PC-3 (cell line): ENCODE measurements at regions of chr7 and their contacts with region 1.

Region 1: GRCh38 chr7:111329367-111330234 is 232.7 kb downstream of the IMMP2L start:
- DNase-seq: peak; percentile 21
- ATAC-seq: peak; percentile 69
- H3K4me3 ChIP-seq: no peak overlapping the region
- H3K27ac ChIP-seq: no peak overlapping the region
- H3K4me1 ChIP-seq: 0 out of 2 replicates have a peak, but pooled peaks cover 4% of the 10 kb centered on the region
- H3K27me3 ChIP-seq: no peaks in the 10 kb centered on the region
- CTCF ChIP-seq: peak; percentile 55

Region 2: DNA sequence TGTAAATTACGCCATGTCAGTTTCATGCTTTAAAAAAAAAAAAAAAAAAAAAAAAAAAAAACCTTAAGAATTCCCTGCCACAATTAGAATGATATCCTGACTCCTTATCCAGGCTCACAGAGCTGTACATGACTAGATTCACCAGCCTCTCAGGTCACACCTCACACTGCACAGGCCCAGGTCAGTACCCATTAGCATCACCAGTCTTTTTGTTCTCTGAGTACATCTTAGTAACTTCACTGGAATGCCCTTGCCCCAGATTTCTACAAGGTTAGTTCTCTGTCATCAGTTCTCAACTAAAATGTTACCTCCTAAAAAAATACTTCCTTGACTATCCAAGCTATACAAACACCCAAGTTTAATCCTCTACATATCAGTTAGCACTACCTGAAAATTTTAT is 27.7 kb before region 1 on chr7:
- CTCF ChIA-PET with region 1: no interaction called
- POLR2A ChIA-PET with region 1: no interaction called
- intact Hi-C with region 1: no loop called
- DNase-seq: no peak
- ATAC-seq: no peak
- H3K4me3 ChIP-seq: no peak overlapping the region
- H3K27ac ChIP-seq: no peak overlapping the region
- H3K4me1 ChIP-seq: no peaks in the 10 kb centered on the region
- H3K27me3 ChIP-seq: no peaks in the 10 kb centered on the region
- CTCF ChIP-seq: no peak

Region 3: DNA sequence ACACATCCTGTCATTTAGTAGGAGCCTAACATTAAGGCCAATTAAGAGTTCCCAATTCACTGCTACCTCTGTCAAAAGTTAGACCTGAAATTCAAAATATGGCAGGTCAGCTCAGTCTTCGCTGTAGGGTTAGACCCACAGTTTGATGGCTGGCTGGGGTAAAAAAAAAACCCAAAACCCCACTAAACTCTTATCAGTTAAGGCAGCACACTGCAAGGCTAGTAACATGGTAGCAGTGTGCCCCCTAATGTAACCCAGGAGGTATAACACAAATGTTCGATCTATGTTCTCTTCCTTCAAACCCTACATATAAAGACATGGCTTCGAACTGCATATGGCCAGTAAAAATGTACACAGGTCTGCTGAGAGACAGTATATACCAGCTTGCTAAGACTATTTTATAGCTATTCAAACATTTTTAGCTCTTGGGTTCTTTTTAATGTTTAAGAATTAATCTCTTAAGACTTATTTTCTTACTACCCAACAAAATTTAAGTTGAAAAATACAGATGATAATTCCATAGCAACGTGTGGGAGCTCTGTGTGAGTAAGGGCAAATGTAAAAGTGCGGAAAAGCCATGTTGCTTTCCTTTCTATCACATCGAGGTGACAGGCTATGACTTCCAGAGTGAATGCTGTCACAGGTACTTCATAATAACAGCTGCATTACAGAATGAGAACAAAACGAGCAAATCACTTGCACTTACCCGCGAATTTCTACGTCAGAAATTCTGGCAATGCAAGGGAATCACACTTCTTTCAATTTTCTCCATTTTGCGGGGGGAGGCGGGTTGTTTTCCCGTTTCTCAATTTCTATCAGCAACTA is 401.1 kb after region 1 on chr7:
- CTCF ChIA-PET with region 1: no interaction called
- POLR2A ChIA-PET with region 1: no interaction called
- intact Hi-C with region 1: loop called (anchors 1 kb)
- DNase-seq: peak; percentile 58
- ATAC-seq: peak; percentile 85
- H3K4me3 ChIP-seq: no peak overlapping the region
- H3K27ac ChIP-seq: peak overlapping the region; percentile 31; the same call in 1 of the 2 replicates
- H3K4me1 ChIP-seq: peaks cover 3% of the 10 kb centered on the region; the same call in 1 of the 2 replicates
- H3K27me3 ChIP-seq: no peaks in the 10 kb centered on the region
- CTCF ChIP-seq: peak; percentile 76